ENCODE measurements at regions of chr11 and their contacts with region 1.

Region 1: DNA sequence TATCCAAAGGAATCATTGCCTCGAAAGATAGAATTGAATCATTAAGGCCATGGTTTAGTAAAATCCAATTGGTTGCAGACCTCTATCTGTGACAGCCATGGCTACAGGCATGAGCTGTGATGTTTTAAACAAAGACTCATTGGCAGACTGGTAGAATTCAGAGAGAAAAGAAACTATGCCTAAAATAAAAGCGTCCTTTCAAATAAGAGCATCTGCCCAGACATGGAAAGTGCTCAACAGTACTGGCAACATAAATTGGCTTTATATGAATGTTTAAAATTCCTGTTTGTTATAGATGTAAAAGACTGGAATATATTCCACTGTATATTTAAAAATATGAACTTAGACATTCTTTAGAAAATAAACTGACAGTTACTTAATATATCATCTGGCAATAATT is 2034.2 kb downstream of the LRRC4C start:
- DNase-seq: no peak
- H3K4me3 ChIP-seq: no peak overlapping the region
- H3K27ac ChIP-seq: no peak overlapping the region
- H3K4me1 ChIP-seq: no peaks in the 10 kb centered on the region
- H3K27me3 ChIP-seq: no peaks in the 10 kb centered on the region
- CTCF ChIP-seq: no peak
- EP300 ChIP-seq: no peak
- POLR2A ChIP-seq: no peak

Region 2: DNA sequence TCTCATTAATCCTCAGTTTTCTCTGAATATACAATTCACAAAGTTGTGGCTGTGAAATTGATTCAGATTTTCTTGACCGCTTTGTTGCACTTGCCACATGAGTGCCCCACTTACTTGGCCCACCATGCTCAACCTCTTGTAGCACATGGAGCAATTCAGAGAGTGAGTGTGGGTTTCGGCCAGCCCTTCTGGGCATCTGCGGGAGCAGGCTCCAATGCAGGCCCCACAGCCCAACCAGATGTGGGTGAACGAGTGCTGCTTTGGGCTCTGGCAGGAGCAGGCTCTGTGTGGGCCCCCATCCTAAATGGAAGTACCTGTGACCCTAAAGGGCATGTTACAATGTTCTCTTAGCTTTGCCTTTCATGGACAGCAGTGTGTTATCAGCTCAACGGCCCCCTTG is 304.3 kb before region 1 on chr11:
- in situ Hi-C with region 1: no loop called
- intact Hi-C with region 1: no loop called
- DNase-seq: no peak
- H3K4me3 ChIP-seq: no peak overlapping the region
- H3K27ac ChIP-seq: no peak overlapping the region
- H3K4me1 ChIP-seq: no peaks in the 10 kb centered on the region
- H3K27me3 ChIP-seq: no peaks in the 10 kb centered on the region
- CTCF ChIP-seq: no peak
- EP300 ChIP-seq: no peak
- POLR2A ChIP-seq: no peak

Region 3: GRCh38 chr11:39385911-39386310 is 39.3 kb before region 1 on chr11:
- in situ Hi-C with region 1: no loop called
- intact Hi-C with region 1: loop called (anchors 1 kb)
- DNase-seq: no peak
- H3K4me3 ChIP-seq: no peak overlapping the region
- H3K27ac ChIP-seq: no peak overlapping the region
- H3K4me1 ChIP-seq: no peaks in the 10 kb centered on the region
- H3K27me3 ChIP-seq: no peaks in the 10 kb centered on the region
- CTCF ChIP-seq: no peak
- EP300 ChIP-seq: no peak
- POLR2A ChIP-seq: no peak

Measured in transverse colon (tissue), 4 donors.